Activated CD8-positive, alpha-beta memory T cell treated with anti-CD3 and anti-CD28 coated beads, Interleukin-2, amount 10 ng/mL, durations not matched to agents 7 days and 5 days (primary cell): ENCODE measurements at regions of chr1 and their contacts with region 1.

Region 1: DNA sequence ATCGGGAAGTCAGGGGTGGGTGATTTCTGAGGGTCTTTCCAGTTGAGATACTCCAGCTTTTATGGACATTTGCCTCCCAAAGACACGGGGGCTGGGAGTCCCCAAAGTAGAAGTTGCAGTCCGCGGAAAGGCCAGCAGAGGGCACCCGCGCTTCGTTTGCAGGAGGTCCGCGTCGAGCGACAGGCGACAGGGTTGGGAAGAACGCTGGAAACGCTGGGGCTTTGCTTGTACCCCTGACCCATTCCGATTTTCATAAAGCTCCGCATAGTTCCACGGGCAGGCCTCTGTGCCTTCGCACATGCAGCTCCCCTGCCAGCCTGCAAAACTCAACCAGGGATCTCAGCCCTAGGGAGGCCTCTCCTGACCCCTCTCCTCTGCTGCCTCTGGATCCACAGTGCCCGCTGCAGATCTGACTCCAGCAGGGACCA is 44.2 kb upstream of the LAPTM5 start:
- DNase-seq: peak; percentile 83
- ATAC-seq: peak; percentile 70
- H3K4me3 Mint-ChIP-seq: no peak overlapping the region
- H3K27ac Mint-ChIP-seq: no peak overlapping the region
- H3K4me1 Mint-ChIP-seq: peaks cover 5% of the 10 kb centered on the region
- H3K27me3 Mint-ChIP-seq: peaks cover 40% of the 10 kb centered on the region

Region 2: DNA sequence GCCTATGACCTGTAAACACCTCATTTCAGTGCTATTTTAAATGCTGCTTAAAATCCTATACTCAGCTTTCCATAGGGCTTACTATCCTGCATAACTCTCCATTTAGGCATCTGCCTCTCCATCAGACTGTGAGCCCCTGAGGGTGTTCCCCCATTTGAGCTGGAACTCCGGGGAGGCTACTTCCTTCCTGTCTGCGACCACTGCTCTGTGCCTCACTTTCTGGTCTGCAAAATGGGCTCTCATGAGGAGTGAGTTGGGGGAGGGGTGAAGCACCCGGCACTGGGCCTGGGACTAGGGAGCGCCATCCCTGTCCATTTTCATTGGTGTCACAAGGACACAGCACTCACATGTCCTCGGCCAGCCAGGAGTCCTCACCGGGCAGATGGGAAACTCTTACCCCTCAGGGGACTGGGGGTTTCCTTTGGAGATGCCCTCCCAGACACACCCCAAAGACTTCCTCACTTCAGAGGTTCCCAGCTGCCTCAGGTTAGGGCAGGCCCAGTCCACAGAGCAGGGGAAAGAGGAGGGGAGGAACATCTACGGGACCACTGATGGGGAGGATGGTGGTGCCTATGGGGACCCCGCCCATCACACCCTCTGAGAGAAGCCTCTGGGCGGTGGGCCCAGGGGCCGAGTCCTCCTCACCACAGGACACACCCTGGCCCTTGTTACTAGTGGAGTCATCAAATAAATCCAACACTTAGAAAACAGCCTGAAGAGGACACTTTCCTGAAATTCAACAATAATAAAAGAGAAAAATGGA is 213.3 kb before region 1 on chr1:
- CTCF ChIA-PET with region 1: no interaction called
- DNase-seq: no peak
- ATAC-seq: no peak
- H3K4me3 Mint-ChIP-seq: no peak overlapping the region
- H3K27ac Mint-ChIP-seq: no peak overlapping the region
- H3K4me1 Mint-ChIP-seq: no peaks in the 10 kb centered on the region
- H3K27me3 Mint-ChIP-seq: peaks cover 27% of the 10 kb centered on the region

Region 3: DNA sequence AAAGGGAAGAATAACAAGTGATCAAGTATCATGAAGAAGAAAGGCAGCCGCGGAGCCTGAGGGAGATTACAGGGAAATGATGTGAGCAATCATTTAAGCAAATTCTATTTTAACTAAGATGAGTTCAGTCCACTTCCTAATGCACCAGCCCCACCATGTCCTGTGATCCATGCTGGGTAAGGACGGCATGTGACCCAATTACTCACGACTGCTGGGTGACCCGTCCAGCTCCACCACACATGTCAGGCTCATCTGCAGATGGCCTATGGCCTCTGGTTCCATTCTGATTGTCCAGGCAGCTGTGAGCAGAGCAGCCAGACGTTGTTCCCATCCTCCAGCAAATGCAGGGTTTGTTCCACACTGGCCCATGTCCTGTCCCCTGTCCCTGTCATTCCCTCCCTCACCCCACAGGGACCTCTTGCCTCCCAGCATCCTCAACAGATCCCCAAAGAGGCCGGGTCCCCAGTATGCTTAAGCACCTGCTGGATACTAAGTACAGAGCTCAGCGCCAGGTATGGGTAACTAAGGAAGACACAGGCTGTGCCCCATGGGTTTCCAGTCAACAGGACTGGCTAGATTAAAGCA is 166.3 kb before region 1 on chr1:
- CTCF ChIA-PET with region 1: no interaction called
- DNase-seq: no peak
- ATAC-seq: no peak
- H3K4me3 Mint-ChIP-seq: no peak overlapping the region
- H3K27ac Mint-ChIP-seq: no peak overlapping the region
- H3K4me1 Mint-ChIP-seq: no peaks in the 10 kb centered on the region
- H3K27me3 Mint-ChIP-seq: peaks cover 7% of the 10 kb centered on the region

Region 4: GRCh38 chr1:30718636-30719405 is 83.0 kb before region 1 on chr1:
- CTCF ChIA-PET with region 1: interaction called, 25 read pairs
- DNase-seq: peak; percentile 89
- ATAC-seq: peak; percentile 69
- H3K4me3 Mint-ChIP-seq: peak overlapping the region; percentile 87
- H3K27ac Mint-ChIP-seq: peak overlapping the region; percentile 96
- H3K4me1 Mint-ChIP-seq: peaks cover 15% of the 10 kb centered on the region
- H3K27me3 Mint-ChIP-seq: no peaks in the 10 kb centered on the region

Region 5: GRCh38 chr1:30790850-30791778 is 10.7 kb before region 1 on chr1:
- CTCF ChIA-PET with region 1: interaction called, 13 read pairs
- DNase-seq: no peak
- ATAC-seq: peak; percentile 36
- H3K4me3 Mint-ChIP-seq: no peak overlapping the region
- H3K27ac Mint-ChIP-seq: no peak overlapping the region
- H3K4me1 Mint-ChIP-seq: peaks cover 8% of the 10 kb centered on the region
- H3K27me3 Mint-ChIP-seq: peaks cover 24% of the 10 kb centered on the region

Region 6: GRCh38 chr1:30866594-30866993 is 64.8 kb after region 1 on chr1:
- CTCF ChIA-PET with region 1: interaction called, 10 read pairs
- DNase-seq: no peak
- ATAC-seq: no peak
- H3K4me3 Mint-ChIP-seq: no peak overlapping the region
- H3K27ac Mint-ChIP-seq: no peak overlapping the region
- H3K4me1 Mint-ChIP-seq: peaks cover 5% of the 10 kb centered on the region
- H3K27me3 Mint-ChIP-seq: peaks cover 51% of the 10 kb centered on the region

Region 7: DNA sequence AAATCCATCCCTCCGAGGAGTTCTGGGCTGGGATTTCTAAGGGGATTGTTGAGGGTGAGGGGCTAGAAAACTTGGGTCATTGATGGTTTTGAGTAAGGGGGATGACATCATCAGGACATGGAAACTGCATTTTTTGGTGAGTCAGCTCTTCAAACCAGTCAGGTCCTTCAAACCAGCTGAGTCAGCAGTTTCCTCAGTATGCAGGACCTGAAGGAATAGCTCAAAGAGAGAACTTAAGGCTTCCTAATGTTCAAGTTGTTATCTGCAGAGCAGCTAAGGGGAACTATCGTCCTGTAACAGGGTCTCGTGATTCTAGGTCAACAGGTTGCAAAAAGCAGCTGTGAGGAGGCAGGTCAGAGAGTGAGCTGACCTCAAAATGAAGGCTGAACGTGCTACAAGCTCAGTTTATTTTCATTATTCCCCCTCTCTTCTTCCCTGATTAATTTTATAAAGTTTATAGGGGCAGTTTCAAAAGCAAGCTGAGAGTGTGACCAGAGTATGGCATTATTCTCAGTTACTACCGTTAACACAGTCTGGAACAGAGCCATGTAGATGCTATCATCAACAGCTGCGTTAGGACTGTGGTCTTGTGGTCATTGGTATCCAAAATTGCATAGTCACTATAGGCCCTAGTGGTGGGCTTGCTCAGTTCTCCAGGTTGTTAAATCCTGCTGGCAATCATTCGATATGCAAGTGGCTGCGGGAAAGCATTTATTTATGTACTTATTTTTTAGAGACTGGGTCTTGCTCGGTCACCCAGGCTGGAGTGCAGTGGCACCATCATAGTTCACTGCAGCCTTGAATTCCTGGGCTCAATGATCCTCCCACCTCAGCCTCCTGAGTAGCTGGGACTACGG is 117.5 kb after region 1 on chr1:
- CTCF ChIA-PET with region 1: interaction called, 120 read pairs
- DNase-seq: peak; percentile 36
- ATAC-seq: no peak
- H3K4me3 Mint-ChIP-seq: no peak overlapping the region
- H3K27ac Mint-ChIP-seq: no peak overlapping the region
- H3K4me1 Mint-ChIP-seq: peaks cover 6% of the 10 kb centered on the region
- H3K27me3 Mint-ChIP-seq: peaks cover 22% of the 10 kb centered on the region